H1 (cell line): ENCODE measurements at regions of chr5 and their contacts with region 1.

Region 1: GRCh38 chr5:139633295-139634027 is 14.7 kb upstream of the CXXC5 start:
- DNase-seq: peak in 1 of 2 experiments; percentile 83
- H3K4me3 ChIP-seq: no peak overlapping the region
- H3K27ac ChIP-seq: no peak overlapping the region
- H3K4me1 ChIP-seq: peaks cover 14 to 27% (median 20%) of the 10 kb centered on the region in 4 experiments
- H3K27me3 ChIP-seq: no peaks in the 10 kb centered on the region
- CTCF ChIP-seq: peak in 2 of 3 experiments; percentile 88 to 100; a peak in 3 of 4 replicates
- EP300 ChIP-seq: no peak
- POLR2A ChIP-seq: peak in 1 of 2 experiments; percentile 34; a peak in 1 of 3 replicates
- RAD21 ChIP-seq: peak; percentile 94 to 95

Region 2: GRCh38 chr5:139651853-139652787 is 18.7 kb after region 1 on chr5:
- CTCF ChIA-PET with region 1: interaction called, 224 read pairs
- POLR2A ChIA-PET with region 1: interaction called, 212 read pairs
- DNase-seq: peak in 1 of 2 experiments; percentile 90
- H3K4me3 ChIP-seq: peak overlapping the region in 3 of 4 experiments; percentile 2 to 90 (median 14); a peak in 5 of 8 replicates
- H3K27ac ChIP-seq: no peak overlapping the region
- H3K4me1 ChIP-seq: peaks cover 20 to 53% (median 50%) of the 10 kb centered on the region in 4 experiments
- H3K27me3 ChIP-seq: peaks cover 0 to 4% (median 0%) of the 10 kb centered on the region in 4 experiments; a peak in 2 of 7 replicates
- CTCF ChIP-seq: no peak
- EP300 ChIP-seq: no peak
- POLR2A ChIP-seq: no peak
- RAD21 ChIP-seq: no peak

Region 3: DNA sequence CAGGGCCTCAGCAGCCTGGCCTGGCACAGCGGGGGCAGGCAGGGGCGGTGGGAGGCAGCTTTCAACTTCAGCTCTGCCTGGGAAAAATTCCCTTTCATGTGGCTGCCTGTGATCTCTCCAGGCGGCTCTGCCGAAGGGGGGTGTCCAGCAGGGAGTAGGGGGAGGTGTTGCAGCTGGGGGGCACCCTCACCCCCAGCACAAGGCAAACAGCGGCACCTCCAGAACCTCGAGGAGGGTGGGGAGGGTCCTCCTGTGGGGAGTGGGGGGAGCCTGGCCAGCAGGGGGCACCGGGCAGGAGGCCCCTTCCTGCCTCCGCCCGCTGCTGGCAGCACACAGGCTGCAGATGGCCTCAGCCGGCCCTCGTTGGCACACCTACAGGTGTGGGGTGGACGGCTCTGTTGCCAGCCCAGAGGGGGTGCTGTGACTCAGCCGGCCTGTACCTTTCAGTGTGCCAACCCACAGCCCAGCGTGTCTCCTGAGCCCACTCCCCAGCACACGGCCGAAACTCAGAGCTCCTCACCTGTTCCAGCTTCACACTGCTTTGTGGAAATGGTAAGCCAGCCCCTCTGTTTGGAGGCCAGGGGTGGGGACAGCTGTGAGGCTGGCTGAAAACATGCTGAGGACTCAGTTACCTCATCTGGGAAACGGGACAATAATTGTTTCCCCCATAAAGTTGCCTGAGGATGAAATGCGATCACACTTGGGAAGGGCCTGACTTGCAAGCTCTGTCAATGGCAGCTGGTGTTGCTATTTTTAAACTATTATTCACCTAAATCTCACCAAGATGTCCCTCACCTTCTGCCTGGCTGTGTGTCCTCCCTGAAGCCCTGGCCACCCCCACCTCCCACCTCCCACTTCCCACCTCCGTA is 51.7 kb after region 1 on chr5:
- CTCF ChIA-PET with region 1: interaction called, 171 read pairs
- POLR2A ChIA-PET with region 1: interaction called, 7 read pairs
- DNase-seq: no peak
- H3K4me3 ChIP-seq: no peak overlapping the region
- H3K27ac ChIP-seq: no peak overlapping the region
- H3K4me1 ChIP-seq: peaks cover 37 to 67% (median 57%) of the 10 kb centered on the region in 4 experiments
- H3K27me3 ChIP-seq: no peaks in the 10 kb centered on the region
- CTCF ChIP-seq: peak in 1 of 3 experiments; percentile 27; a peak in 2 of 4 replicates
- EP300 ChIP-seq: no peak
- POLR2A ChIP-seq: no peak
- RAD21 ChIP-seq: peak in 1 of 2 experiments; percentile 25; a peak in 2 of 4 replicates

Region 4: DNA sequence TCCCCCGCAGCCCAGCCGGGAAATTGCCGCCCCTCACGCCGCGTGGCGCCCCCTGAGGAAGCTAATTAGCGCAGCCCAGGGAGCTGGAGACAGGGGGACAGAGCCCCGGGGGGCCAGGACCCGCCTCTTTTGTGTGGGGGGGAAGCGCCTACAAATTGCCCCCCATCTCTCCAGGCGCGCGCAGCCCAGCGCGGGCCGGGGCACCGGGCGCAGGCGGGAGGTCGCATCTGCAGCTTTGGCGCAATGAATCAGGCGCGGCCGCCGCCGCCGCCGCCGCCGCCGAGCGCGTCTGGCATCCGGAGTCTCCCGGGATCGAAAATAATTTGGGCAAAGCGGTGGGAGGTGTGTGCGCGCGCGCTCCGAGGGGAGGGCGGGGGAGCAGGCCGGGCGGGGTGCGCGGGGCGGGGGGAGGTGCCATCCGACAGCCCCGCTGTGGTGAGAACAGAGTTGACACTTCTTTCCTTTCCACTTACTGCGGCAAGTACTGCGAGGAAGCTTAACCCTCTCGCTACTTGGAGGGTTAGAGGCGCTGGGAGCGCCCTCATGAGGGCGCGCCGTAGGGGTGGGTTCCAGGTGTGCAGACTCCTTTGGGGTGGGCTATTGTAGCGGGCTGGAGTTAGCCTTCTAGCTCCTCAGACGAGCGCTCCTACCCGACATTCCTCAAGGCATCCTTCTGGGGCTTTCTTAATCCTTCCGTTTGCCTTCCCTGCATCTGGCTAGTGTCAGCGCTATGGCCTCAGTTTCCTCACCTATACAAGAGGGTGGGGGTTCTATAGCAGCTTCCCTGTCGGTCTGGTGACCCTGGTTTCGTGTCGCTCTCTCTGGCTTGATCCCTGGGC is 77.8 kb after region 1 on chr5:
- CTCF ChIA-PET with region 1: interaction called, 141 read pairs
- POLR2A ChIA-PET with region 1: interaction called, 78 read pairs
- DNase-seq: peak in 1 of 2 experiments; percentile 82
- H3K4me3 ChIP-seq: peak overlapping the region; percentile 40 to 79 (median 54)
- H3K27ac ChIP-seq: 0 out of 2 replicates have a peak overlapping the region, but pooled peaks have one; percentile 14
- H3K4me1 ChIP-seq: peaks cover 13 to 34% (median 24%) of the 10 kb centered on the region in 4 experiments
- H3K27me3 ChIP-seq: peaks cover 0 to 11% (median 9%) of the 10 kb centered on the region in 4 experiments; a peak in 4 of 7 replicates
- CTCF ChIP-seq: peak in 2 of 3 experiments; percentile 35 to 36; a peak in 3 of 4 replicates
- EP300 ChIP-seq: 0 out of 3 replicates have a peak, but pooled peaks of 1 of the 2 experiments have one; percentile 29
- POLR2A ChIP-seq: peak in 1 of 2 experiments; percentile 40; a peak in 1 of 3 replicates
- RAD21 ChIP-seq: peak; percentile 28 to 61; a peak in 3 of 4 replicates

Region 5: GRCh38 chr5:139740138-139740991 is 106.9 kb after region 1 on chr5:
- CTCF ChIA-PET with region 1: interaction called, 39 read pairs
- POLR2A ChIA-PET with region 1: interaction called, 4 read pairs
- DNase-seq: no peak
- H3K4me3 ChIP-seq: no peak overlapping the region
- H3K27ac ChIP-seq: no peak overlapping the region
- H3K4me1 ChIP-seq: peaks cover 0 to 32% (median 22%) of the 10 kb centered on the region in 4 experiments; a peak in 6 of 7 replicates
- H3K27me3 ChIP-seq: peaks cover 0 to 7% (median 3%) of the 10 kb centered on the region in 4 experiments; a peak in 4 of 7 replicates
- CTCF ChIP-seq: no peak
- EP300 ChIP-seq: no peak
- POLR2A ChIP-seq: no peak
- RAD21 ChIP-seq: no peak

Region 6: DNA sequence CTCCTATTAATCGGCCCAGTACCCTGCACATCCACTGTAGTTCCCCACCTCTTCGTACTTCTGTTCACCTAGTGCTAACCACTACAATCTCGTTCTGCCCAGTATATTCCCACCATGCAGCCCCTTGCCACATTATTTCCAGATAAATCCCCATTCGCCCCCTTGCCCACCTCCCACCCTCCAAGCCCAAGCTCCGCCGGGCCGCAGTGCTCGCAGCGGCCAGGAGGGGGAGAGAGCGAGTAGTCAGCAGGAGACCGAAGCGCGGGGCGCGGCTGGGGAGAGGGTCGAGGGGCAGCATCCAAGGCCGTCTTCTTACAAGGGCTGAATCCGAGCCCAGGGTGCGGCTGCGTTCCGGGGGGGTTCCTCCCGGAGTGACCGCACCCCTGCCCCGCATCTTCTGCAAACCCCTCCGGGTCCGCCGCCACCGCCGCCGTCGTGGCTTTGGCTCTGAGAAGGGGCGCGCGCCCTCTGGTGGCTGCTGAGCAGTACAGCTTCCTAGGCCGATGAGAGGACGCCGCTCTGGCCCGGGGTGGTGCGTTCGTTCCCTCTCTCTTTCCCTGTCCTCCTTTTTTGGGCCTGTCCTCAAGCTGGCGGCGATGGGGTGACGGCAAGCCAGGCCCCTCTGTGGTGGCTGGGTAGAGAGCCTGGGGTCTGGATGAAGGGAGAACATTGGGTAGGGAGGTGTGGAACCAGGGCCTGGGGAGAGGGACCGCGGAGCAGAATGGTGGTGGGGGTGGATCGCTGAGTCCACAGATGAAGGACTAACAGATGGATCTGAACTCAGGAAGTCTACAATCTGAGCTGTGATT is 132.2 kb after region 1 on chr5:
- CTCF ChIA-PET with region 1: interaction called, 385 read pairs
- POLR2A ChIA-PET with region 1: interaction called, 14 read pairs
- DNase-seq: peak in 1 of 2 experiments; percentile 97
- H3K4me3 ChIP-seq: peak overlapping the region; percentile 15 to 73 (median 66); a peak in 7 of 8 replicates
- H3K27ac ChIP-seq: no peak overlapping the region
- H3K4me1 ChIP-seq: peaks cover 9 to 32% (median 15%) of the 10 kb centered on the region in 4 experiments
- H3K27me3 ChIP-seq: peaks cover 8 to 36% (median 26%) of the 10 kb centered on the region in 4 experiments
- CTCF ChIP-seq: peak in 2 of 3 experiments; percentile 65 to 75; a peak in 3 of 4 replicates
- EP300 ChIP-seq: no peak
- POLR2A ChIP-seq: no peak
- RAD21 ChIP-seq: peak; percentile 66 to 71